HCT116 (cell line): ENCODE measurements at regions of chr12 and their contacts with region 1.

Region 1: DNA sequence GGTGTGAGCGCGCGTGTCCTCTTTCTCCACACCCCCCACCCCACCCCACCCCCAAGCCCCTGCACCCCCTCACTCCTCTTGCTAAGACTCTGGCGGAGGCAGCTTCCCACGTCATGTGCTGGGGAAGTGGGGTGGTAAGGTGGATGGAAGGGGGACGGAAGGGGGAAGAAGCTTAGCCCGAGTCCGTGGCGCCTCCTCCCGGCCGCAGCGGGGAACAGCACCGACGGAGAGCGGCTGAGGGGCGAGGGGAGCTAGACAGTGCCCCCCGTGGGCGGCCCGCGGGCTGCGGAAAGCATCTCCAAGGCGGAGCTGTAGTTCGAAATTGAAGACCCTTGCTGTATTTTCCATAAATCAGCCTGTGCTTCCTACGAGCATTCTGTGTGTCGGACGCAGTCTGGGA is 588 bp upstream of the GRIN2B start:
- DNase-seq: peak; percentile 15
- ATAC-seq: peak; percentile 74
- H3K4me3 ChIP-seq: peak overlapping the region; percentile 67 to 73
- H3K27ac ChIP-seq: no peak overlapping the region
- H3K4me1 ChIP-seq: peaks cover 2 to 29% of the 10 kb centered on the region in 2 experiments; a peak in 3 of 4 replicates
- H3K27me3 ChIP-seq: peaks cover 5% of the 10 kb centered on the region; the same call in 1 of the 2 replicates
- CTCF ChIP-seq: peak; percentile 80 to 88 (median 86)
- POLR2A ChIP-seq: no peak
- RAD21 ChIP-seq: peak; percentile 67

Region 2: DNA sequence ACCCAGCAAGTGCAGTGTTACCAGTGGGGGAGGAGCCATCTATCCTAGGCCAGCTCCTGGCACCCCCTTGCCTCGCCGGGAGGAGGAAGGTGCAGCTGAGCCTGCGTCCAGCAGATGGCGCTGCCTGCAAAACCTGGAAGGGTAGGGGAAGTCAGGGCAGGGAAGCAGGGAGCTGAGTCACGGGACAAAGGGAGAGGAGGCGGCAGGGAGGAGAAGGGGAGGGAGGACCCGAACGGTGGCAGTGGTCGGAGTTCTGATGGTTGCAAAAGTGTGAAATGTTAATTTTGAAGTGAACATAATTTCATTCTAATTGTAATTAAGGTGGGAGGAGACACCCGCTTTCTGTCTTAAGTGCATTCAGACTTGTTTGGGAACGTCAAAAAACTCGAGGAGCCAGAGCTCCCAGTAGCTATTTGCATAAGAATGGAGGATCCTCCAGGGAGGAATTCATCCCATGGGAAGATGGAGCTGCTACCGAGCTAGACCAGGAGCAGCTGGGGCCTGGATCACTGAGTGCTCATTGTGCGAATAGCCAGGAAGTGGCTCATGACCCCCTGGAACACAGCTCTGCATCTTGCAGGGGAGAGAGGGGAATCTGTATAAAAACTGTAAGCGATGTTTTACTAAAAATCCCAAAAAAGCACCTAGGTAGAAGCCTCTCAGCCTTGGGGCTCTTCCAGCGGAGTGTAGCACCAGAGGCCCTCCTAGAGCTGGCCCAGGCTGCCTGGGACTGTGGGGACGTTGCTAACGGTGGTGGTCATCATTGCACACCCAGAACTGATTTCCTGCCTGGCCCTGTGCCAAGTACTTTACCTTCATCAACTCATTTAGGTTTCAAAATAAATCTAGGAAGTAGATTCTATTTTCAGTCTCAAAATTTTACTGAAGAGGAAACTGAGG is 725.9 kb before region 1 on chr12:
- CTCF ChIA-PET with region 1: interaction called, 28 read pairs
- POLR2A ChIA-PET with region 1: no interaction called
- RAD21 ChIA-PET with region 1: no interaction called
- intact Hi-C with region 1: no loop called
- DNase-seq: peak; percentile 89
- ATAC-seq: peak; percentile 100
- H3K4me3 ChIP-seq: peak overlapping the region in 1 of 2 experiments; percentile 13; a peak in 1 of 4 replicates
- H3K27ac ChIP-seq: no peak overlapping the region
- H3K4me1 ChIP-seq: peaks cover 0 to 15% of the 10 kb centered on the region in 2 experiments; a peak in 2 of 4 replicates
- H3K27me3 ChIP-seq: no peaks in the 10 kb centered on the region
- CTCF ChIP-seq: peak; percentile 91 to 98 (median 97)
- POLR2A ChIP-seq: no peak
- RAD21 ChIP-seq: peak; percentile 98

Region 3: DNA sequence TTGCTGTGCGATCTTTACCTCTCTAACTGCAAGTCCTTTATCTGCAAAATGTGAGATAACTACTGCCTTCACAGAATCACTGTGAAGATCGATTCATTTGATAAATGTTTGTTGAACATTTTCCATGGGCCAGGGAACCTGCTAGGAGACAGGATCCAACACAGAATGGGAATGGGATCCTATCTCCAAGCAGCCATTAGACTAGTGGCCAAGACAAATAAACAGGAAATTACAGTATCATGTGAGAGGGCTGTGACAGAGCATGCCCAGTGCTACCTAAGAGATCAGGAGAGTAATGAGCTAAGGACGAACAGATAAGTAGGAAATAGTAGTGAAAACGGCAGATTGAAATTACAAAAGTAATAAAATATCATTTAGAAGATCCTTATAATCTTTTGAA is 106.2 kb before region 1 on chr12:
- CTCF ChIA-PET with region 1: no interaction called
- POLR2A ChIA-PET with region 1: no interaction called
- RAD21 ChIA-PET with region 1: no interaction called
- intact Hi-C with region 1: no loop called
- DNase-seq: no peak
- ATAC-seq: no peak
- H3K4me3 ChIP-seq: no peak overlapping the region
- H3K27ac ChIP-seq: no peak overlapping the region
- H3K4me1 ChIP-seq: no peaks in the 10 kb centered on the region
- H3K27me3 ChIP-seq: no peaks in the 10 kb centered on the region
- CTCF ChIP-seq: no peak
- POLR2A ChIP-seq: no peak
- RAD21 ChIP-seq: no peak

Region 4: DNA sequence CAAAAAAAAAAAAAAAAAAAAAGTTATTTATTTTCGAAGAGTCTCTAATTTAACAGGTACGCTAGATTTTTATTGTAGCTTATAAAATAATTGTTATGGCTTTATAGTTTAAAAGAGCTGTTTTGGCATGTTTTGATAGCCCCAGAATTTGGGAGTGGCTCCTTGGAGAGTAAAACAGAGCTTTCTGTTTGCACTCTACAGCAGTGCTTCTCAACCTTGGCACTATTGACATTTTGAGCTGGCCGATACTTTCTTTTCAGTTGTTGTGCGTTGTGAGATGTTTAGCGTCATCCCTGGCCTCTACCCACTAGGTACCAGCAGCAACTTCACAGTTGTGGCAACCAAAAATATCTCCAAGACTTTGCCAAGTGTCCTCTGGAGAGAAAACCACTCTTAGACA is 555.1 kb after region 1 on chr12:
- CTCF ChIA-PET with region 1: no interaction called
- POLR2A ChIA-PET with region 1: no interaction called
- RAD21 ChIA-PET with region 1: no interaction called
- intact Hi-C with region 1: no loop called
- DNase-seq: no peak
- ATAC-seq: no peak
- H3K4me3 ChIP-seq: no peak overlapping the region
- H3K27ac ChIP-seq: no peak overlapping the region
- H3K4me1 ChIP-seq: no peaks in the 10 kb centered on the region
- H3K27me3 ChIP-seq: no peaks in the 10 kb centered on the region
- CTCF ChIP-seq: no peak
- POLR2A ChIP-seq: no peak
- RAD21 ChIP-seq: no peak

Region 5: GRCh38 chr12:14920475-14921126 is 938.6 kb after region 1 on chr12:
- CTCF ChIA-PET with region 1: no interaction called
- POLR2A ChIA-PET with region 1: no interaction called
- RAD21 ChIA-PET with region 1: no interaction called
- intact Hi-C with region 1: no loop called
- DNase-seq: no peak
- ATAC-seq: no peak
- H3K4me3 ChIP-seq: no peak overlapping the region
- H3K27ac ChIP-seq: no peak overlapping the region
- H3K4me1 ChIP-seq: no peaks in the 10 kb centered on the region
- H3K27me3 ChIP-seq: no peaks in the 10 kb centered on the region
- CTCF ChIP-seq: no peak
- POLR2A ChIP-seq: no peak
- RAD21 ChIP-seq: no peak